ENCODE measurements at regions of chr20 and their contacts with region 1.

Region 1: DNA sequence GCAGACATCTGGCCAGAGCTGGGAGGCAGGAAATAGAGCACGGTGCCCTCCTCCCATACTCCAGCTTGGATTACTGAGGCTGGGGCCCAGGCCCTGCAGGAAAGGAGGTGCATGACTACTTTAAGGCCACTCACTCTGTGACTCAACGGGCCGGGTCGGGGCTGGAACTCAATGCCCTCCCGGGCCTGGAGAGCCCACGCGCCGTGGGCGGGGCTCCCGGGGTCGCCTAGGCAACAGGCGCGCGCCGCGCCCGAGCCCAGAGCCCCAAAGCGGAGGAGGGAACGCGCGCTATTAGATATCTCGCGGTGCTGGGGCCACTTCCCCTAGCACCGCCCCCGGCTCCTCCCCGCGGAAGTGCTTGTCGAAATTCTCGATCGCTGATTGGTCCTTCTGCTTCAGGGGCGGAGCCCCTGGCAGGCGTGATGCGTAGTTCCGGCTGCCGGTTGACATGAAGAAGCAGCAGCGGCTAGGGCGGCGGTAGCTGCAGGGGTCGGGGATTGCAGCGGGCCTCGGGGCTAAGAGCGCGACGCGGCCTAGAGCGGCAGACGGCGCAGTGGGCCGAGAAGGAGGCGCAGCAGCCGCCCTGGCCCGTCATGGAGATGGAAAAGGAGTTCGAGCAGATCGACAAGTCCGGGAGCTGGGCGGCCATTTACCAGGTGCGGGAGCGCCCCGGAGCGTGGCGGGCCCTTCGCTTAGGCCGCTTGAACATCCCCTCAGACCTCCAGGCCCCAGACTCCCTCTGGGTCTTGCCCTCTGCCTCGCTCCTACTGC is at the start of gene PTPN1:
- DNase-seq: peak; percentile 99
- H3K4me3 Mint-ChIP-seq: peak within 1 kb of the TSS; percentile 91
- H3K27ac Mint-ChIP-seq: peak within 1 kb of the TSS; percentile 81
- H3K4me1 Mint-ChIP-seq: peaks cover 42% of the 10 kb centered on the region
- H3K27me3 Mint-ChIP-seq: no peaks in the 10 kb centered on the region
- total RNA-seq, gene PTPN1: 79.6 to 80.5 TPM

Region 2: GRCh38 chr20:50478162-50479036 is 31.7 kb before region 1 on chr20:
- CTCF ChIA-PET with region 1: interaction called, 19 read pairs
- POLR2A ChIA-PET with region 1: interaction called, 20 read pairs
- DNase-seq: peak; percentile 83
- H3K4me3 Mint-ChIP-seq: no peak overlapping the region
- H3K27ac Mint-ChIP-seq: no peak overlapping the region
- H3K4me1 Mint-ChIP-seq: peaks cover 60% of the 10 kb centered on the region
- H3K27me3 Mint-ChIP-seq: no peaks in the 10 kb centered on the region

Region 3: GRCh38 chr20:50484276-50484976 is 25.7 kb before region 1 on chr20:
- CTCF ChIA-PET with region 1: interaction called, 19 read pairs
- POLR2A ChIA-PET with region 1: interaction called, 20 read pairs
- DNase-seq: no peak
- H3K4me3 Mint-ChIP-seq: peak overlapping the region; percentile 80
- H3K27ac Mint-ChIP-seq: peak overlapping the region; percentile 88
- H3K4me1 Mint-ChIP-seq: peaks cover 51% of the 10 kb centered on the region
- H3K27me3 Mint-ChIP-seq: no peaks in the 10 kb centered on the region

Region 4: GRCh38 chr20:50540620-50541605 is 30.8 kb after region 1 on chr20:
- CTCF ChIA-PET with region 1: interaction called, 4 read pairs
- POLR2A ChIA-PET with region 1: interaction called, 209 read pairs
- DNase-seq: no peak
- H3K4me3 Mint-ChIP-seq: no peak overlapping the region
- H3K27ac Mint-ChIP-seq: no peak overlapping the region
- H3K4me1 Mint-ChIP-seq: peaks cover 61% of the 10 kb centered on the region
- H3K27me3 Mint-ChIP-seq: no peaks in the 10 kb centered on the region

Region 5: GRCh38 chr20:50561379-50562078 is 51.4 kb after region 1 on chr20:
- CTCF ChIA-PET with region 1: interaction called, 5 read pairs
- POLR2A ChIA-PET with region 1: interaction called, 36 read pairs
- DNase-seq: peak; percentile 54
- H3K4me3 Mint-ChIP-seq: peak overlapping the region; percentile 32
- H3K27ac Mint-ChIP-seq: peak overlapping the region; percentile 85
- H3K4me1 Mint-ChIP-seq: peaks cover 60% of the 10 kb centered on the region
- H3K27me3 Mint-ChIP-seq: no peaks in the 10 kb centered on the region

Region 6: DNA sequence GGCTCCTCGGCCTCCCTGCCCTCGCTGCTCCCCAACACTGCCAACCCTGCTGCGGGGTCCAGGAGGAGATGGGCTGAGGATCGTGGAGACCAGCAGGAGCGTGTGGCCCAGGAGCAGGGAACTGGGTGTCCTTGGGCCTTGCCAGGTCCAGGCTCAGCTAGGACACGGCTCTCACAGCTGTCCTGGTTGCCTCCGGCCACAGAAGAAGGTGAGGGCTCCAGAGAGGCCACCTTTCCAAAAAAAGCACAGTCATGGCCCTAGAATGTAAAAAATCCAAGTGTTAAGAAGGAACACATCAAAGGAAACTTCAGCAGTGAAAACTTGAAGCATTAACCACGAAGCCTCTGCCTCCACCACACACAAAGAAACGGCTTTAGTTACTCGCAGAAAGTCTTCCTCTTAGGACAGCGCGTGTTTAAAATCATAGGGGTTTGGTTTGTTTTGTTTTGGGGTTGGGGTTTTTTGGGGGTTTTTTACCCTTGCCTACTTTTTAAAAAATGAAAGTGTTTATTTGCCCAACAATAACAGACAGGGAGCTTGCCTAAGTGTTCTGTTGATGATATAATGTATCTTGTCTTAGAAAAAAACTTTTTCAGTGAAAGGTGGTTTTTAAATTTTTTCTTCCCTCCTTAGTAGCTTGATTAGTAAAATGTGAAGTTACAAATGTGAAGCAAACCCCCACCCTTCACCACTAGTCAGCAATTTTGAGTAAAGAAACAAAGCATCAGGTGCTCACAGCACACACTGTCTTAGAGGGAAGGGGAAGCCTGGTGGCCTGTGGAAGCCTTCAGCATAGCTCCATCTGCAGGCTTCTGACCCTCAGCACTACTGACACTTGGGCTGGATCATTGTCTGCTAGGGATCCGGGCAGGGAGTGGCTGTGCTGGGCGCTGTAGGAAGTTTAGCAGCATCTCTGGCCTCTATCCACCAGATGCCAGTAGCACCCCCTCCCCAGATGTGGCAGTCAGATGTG is 60.0 kb after region 1 on chr20:
- CTCF ChIA-PET with region 1: interaction called, 28 read pairs
- POLR2A ChIA-PET with region 1: interaction called, 22 read pairs
- DNase-seq: peak; percentile 53
- H3K4me3 Mint-ChIP-seq: no peak overlapping the region
- H3K27ac Mint-ChIP-seq: peak overlapping the region; percentile 73
- H3K4me1 Mint-ChIP-seq: peaks cover 59% of the 10 kb centered on the region
- H3K27me3 Mint-ChIP-seq: no peaks in the 10 kb centered on the region

Region 7: DNA sequence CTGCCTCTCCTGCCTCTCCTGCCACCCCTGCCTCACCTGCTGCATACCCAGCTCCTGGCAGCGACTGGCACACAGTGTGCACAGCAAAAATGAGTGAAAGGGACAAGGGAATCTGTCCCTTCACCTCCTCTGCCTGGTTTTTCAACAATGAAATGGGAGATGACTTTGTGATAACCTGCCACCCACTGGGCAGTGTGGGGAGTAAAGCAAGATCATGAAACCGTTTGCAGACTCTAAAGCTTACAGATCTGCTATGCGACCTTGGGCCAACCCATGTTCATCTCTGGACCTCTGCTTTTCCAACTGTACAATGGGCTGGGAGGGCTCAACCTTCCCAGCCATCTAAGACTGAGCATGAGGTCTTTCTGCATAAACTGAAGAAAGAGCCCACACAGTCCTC is 100.1 kb after region 1 on chr20:
- CTCF ChIA-PET with region 1: no interaction called
- POLR2A ChIA-PET with region 1: no interaction called
- DNase-seq: no peak
- H3K4me3 Mint-ChIP-seq: no peak overlapping the region
- H3K27ac Mint-ChIP-seq: no peak overlapping the region
- H3K4me1 Mint-ChIP-seq: no peaks in the 10 kb centered on the region
- H3K27me3 Mint-ChIP-seq: no peaks in the 10 kb centered on the region

Measured in activated CD4-positive, alpha-beta memory T cell treated with anti-CD3 and anti-CD28 coated beads, Interleukin-2, amount 10 ng/mL, durations not matched to agents 7 days and 5 days (primary cell).